Activated CD4-positive, alpha-beta memory T cell treated with anti-CD3 and anti-CD28 coated beads for 36 hours (primary cell): ENCODE measurements at regions of chrX and their contacts with region 1.

Region 1: GRCh38 chrX:1468250-1468772 is 15.6 kb upstream of the ASMTL start:
- DNase-seq: peak; percentile 93
- H3K4me3 Mint-ChIP-seq: peak overlapping the region; percentile 64
- H3K27ac Mint-ChIP-seq: peak overlapping the region; percentile 91
- H3K4me1 Mint-ChIP-seq: peaks cover 89% of the 10 kb centered on the region
- H3K27me3 Mint-ChIP-seq: no peaks in the 10 kb centered on the region

Region 2: GRCh38 chrX:1500701-1501624 is 32.7 kb after region 1 on chrX:
- CTCF ChIA-PET with region 1: no interaction called
- POLR2A ChIA-PET with region 1: no interaction called
- intact Hi-C with region 1: loop called (anchors 2 kb)
- DNase-seq: peak; percentile 47
- H3K4me3 Mint-ChIP-seq: peak overlapping the region; percentile 16
- H3K27ac Mint-ChIP-seq: peak overlapping the region; percentile 77
- H3K4me1 Mint-ChIP-seq: peaks cover 27% of the 10 kb centered on the region
- H3K27me3 Mint-ChIP-seq: no peaks in the 10 kb centered on the region